ENCODE measurements at regions of chr10 and their contacts with region 1.

Region 1: GRCh38 chr10:60444494-60445064 is 54.9 kb upstream of the ANK3 start:
- DNase-seq: no peak
- ATAC-seq: no peak

Region 2: DNA sequence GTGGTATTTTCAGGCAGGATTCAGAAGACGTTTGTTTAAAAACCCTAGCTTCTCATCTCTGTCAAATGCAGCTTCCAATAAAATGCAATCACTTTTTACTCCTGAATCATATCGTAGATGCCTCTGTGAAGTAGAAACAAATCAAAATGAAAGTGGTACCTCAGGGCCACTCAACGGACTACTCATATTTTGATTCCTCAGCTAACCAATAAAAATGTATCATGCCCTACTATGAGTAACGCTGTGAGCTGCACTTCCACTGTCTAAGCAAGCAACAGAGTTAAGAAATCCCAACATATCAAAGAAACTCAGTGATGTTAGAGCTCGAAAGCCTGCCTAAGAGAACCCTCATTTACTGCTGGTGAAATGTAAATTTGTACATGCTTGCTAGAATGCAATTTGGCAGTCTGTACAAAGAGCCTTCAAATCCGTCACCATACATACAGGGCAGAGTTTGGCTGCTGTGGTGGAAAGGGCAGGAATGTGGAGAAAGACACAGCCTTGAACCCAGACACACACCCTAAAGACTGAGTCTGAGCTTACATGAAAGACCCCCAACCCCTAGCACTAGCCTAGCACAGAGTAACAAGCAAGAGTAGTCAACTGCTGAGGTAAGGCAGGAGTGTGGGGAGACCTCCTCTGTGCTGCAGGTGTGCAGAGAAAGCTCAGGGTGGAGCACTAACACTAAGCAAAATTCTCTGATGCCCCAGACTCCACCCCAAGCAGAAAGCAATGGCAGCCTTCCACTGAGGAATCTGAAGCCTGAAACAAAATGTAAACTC is 206.4 kb before region 1 on chr10:
- intact Hi-C with region 1: no loop called
- DNase-seq: no peak
- ATAC-seq: peak; percentile 69

Region 3: GRCh38 chr10:60456053-60456452 is 11.5 kb after region 1 on chr10:
- intact Hi-C with region 1: no loop called
- DNase-seq: no peak
- ATAC-seq: no peak

Region 4: DNA sequence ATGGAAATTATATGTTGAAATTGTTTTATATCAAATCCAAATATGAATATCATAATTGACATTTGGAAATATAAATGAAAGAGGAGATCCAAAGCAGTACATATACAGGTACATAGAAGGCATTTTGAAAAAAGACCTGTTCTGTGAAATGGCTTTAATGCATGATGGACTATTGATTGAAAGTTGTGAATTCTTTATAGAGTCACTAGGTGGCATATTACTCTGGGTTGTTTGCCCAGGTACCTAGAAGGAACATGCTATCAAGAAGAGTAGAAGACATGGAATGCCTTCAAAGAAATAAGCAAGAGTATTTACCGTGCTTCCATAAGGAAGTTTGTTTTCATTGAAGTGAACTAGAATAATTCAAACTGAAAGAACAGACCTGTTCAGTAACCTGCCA is 105.1 kb after region 1 on chr10:
- intact Hi-C with region 1: loop called (anchors 10 kb)
- DNase-seq: no peak
- ATAC-seq: no peak

Region 5: DNA sequence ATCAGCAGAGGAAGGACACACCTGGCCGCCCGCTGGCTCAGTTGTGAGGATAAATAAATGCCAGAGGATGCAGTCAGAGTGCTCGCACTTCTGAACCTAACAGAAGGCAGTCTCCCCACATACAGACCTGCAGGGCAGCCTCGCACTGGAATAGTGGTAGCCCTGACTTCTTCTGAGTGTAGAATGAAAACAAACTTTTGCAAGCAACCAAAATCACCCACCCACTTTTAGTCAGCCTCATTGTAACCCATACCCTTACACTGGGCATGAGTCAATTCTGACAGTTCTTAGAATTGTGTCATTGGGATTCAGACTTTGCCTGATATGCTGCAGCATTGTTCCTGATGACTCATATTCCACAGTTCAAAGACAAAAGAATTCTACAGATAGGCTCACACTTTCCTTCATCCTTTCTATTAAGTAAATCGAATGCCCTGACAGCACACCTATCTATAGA is 166.7 kb after region 1 on chr10:
- intact Hi-C with region 1: loop called (anchors 10 kb)
- DNase-seq: peak; percentile 58
- ATAC-seq: no peak

Region 6: DNA sequence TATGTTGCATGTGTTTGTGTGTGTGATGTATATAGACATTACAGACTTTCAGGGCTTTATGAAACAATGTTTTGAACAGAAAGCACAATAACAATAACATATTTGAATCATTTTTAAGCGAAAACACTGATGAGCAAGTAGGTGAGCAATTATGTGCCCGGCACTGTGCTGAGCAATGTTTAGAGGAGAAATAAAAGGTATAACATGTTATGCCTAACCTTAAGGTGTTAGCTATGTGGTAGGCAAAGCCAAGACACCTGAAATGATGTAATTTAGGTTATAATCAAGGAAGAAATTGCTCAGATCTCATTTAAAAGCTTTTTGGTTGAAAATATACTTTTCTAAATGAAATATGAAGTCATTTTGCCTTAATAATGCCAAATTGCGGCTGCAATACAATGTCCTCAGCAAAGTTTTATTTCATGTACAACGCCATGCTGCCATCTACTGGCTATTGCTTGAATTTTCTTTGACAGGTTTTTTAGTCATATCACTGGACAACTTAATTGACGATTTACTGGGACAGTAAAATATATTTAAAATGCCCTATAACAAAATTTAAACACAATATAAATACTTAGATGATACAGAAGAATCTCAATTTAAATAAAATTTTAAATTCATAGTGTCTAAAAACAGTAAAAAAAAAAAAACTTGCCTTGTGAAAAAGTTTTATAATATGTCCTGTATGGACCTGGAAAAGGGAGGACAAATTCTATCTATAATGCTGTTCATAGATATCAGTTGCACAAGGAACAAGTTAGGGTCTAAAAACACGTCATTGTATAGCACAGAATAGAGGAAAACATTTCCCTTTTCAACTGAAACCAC is 202.6 kb after region 1 on chr10:
- intact Hi-C with region 1: loop called (anchors 1 kb)
- DNase-seq: no peak
- ATAC-seq: no peak